ENCODE measurements at regions of chr11 and their contacts with region 1.

Region 1: GRCh38 chr11:94623120-94623735 is 56.1 kb downstream of the PIWIL4 start:
- DNase-seq: no peak
- H3K4me3 ChIP-seq: no peak overlapping the region
- H3K27ac ChIP-seq: no peak overlapping the region
- H3K4me1 ChIP-seq: no peaks in the 10 kb centered on the region
- H3K27me3 ChIP-seq: no peaks in the 10 kb centered on the region
- CTCF ChIP-seq: peak; percentile 91

Region 2: GRCh38 chr11:94767761-94768601 is 144.8 kb after region 1 on chr11 and contains the start of gene AMOTL1:
- intact Hi-C with region 1: loop called (anchors 10 kb)
- DNase-seq: peak; percentile 90
- H3K4me3 ChIP-seq: peak within 1 kb of the TSS; percentile 84
- H3K27ac ChIP-seq: peak within 1 kb of the TSS; percentile 93
- H3K4me1 ChIP-seq: peaks cover 51% of the 10 kb centered on the region
- H3K27me3 ChIP-seq: no peaks in the 10 kb centered on the region
- CTCF ChIP-seq: no peak
- total RNA-seq, gene AMOTL1: 61.1 TPM

Region 3: DNA sequence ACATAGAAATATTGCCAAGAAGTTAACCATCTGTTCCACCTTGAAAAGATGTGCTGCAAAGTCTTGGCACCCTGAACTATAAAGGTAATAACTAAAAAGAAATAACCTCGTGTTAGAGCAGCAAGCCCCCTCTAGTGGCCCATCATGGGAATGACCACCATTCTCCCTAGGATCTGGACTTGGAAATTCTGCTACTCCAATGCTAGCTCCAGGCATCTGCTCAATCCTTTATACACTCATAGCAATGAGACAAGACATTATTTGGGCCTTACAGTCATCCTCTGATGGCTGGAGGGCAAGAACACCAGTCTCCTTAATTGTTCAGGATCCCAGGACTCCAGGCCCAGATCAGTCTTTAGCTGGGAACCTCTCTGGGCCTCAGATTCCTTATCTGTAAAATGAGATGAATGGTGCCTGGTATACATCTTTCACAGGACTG is 274.1 kb after region 1 on chr11:
- intact Hi-C with region 1: loop called (anchors 5 kb)
- DNase-seq: peak; percentile 43
- H3K4me3 ChIP-seq: no peak overlapping the region
- H3K27ac ChIP-seq: no peak overlapping the region
- H3K4me1 ChIP-seq: no peaks in the 10 kb centered on the region
- H3K27me3 ChIP-seq: no peaks in the 10 kb centered on the region
- CTCF ChIP-seq: peak; percentile 96

Region 4: GRCh38 chr11:94968334-94968958 is 345.2 kb after region 1 on chr11:
- intact Hi-C with region 1: loop called (anchors 5 kb)
- DNase-seq: no peak
- H3K4me3 ChIP-seq: no peak overlapping the region
- H3K27ac ChIP-seq: no peak overlapping the region
- H3K4me1 ChIP-seq: peaks cover 25% of the 10 kb centered on the region
- H3K27me3 ChIP-seq: no peaks in the 10 kb centered on the region
- CTCF ChIP-seq: peak; percentile 63